Right ventricle myocardium inferior (tissue), 1 donor: ENCODE measurements at regions of chr5 and their contacts with region 1.

Region 1: DNA sequence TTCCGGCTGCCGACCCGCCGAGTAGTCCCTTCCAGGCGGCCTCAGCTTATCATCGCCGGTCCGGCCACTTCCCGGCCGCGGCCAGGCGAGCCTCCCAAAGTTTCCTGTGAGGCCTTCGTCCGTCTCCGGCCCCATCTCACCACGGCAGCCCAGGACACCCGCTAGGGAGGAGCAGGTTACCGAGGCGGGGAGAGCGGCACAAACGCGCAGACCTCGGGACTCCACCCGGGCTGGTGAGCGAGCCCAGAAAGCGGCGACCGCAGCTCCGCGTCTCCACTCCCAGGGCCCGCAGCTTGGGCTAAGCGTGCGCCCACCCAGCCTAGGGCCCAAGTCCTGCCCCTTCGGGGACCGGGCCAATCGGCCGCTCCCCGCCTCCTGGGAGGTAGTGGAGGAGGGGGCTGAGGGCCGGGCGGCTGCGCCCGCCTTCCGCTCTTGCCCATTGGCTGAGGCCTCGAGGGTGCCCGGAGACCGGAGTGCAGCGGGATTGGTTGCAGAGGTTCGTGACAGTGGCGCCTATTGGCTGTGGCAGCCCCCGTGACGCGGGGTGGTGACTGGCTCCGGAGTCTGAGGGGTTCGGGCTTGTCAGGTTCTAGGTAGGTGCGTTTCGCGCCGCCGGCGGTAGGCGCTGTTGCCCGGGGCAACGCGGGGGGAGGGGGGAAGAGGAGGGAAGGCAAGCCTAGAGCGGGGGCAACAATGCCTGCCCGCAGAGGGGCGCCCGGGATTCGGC is 867 bp downstream of the FER start:
- DNase-seq: peak; percentile 99
- ATAC-seq: peak; percentile 99

Region 2: GRCh38 chr5:108727651-108728565 is 20.7 kb before region 1 on chr5:
- intact Hi-C with region 1: loop called (anchors 1 kb)
- DNase-seq: peak; percentile 92
- ATAC-seq: peak; percentile 100

Region 3: DNA sequence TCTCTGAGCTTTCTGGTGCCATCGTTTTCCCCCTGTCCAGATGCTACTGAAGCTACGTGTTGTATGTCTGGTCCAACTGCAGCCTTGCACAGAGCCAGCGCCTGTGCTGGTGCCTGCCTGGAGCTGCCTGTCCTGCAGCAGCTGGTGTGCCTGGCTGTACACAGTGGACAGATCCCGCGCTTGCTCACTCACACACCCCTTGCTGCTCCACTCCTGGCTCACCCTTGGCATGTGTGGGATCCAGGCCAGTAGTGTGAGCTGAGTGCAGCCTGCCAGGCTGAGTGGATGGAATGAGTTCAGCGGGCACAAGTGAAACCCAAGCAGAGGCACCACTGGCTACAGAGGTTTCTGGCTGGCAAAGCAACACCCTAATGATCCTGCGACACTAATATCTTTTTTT is 39.6 kb after region 1 on chr5:
- intact Hi-C with region 1: loop called (anchors 5 kb)
- DNase-seq: peak; percentile 84
- ATAC-seq: peak; percentile 97

Region 4: GRCh38 chr5:108798513-108799265 is 50.1 kb after region 1 on chr5:
- intact Hi-C with region 1: no loop called
- DNase-seq: no peak
- ATAC-seq: no peak